ENCODE measurements at regions of chr5 and their contacts with region 1.

Region 1: GRCh38 chr5:137751869-137752491 is 2.2 kb downstream of the HNRNPA0 start:
- DNase-seq: peak in 1 of 35 experiments; percentile 56
- ATAC-seq: no peak
- H3K4me3 ChIP-seq: peak overlapping the region; percentile 44 to 97
- H3K4me3 Mint-ChIP-seq: peak overlapping the region; percentile 88 to 97 (median 95)
- H3K27ac ChIP-seq: peak overlapping the region; percentile 100
- H3K27ac Mint-ChIP-seq: peak overlapping the region; percentile 100
- H3K4me1 ChIP-seq: peaks cover 17 to 26% of the 10 kb centered on the region in 2 experiments
- H3K4me1 Mint-ChIP-seq: peaks cover 24 to 40% (median 36%) of the 10 kb centered on the region in 3 donors
- H3K27me3 ChIP-seq: no peaks in the 10 kb centered on the region
- H3K27me3 Mint-ChIP-seq: no peaks in the 10 kb centered on the region

Region 2: DNA sequence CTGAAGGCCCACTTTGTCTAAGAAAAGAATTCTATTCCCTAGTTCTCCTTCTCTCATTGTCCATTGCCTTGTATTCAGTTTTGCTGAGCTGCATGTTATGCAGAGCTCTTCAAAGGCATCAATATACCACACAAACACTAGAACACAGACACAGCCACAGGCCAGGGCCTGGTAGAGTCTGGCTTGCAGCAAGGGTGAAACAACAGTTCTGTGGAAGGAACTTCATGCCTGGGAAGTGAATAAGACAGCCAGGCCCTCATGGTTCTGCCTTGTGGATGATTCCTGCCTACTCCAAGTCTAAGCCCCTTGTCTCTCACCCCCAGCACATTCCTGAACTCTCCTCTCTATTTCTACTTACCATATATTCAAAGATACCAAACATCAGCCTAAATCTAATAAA is 46.9 kb before region 1 on chr5:
- CTCF ChIA-PET with region 1: no interaction called
- POLR2A ChIA-PET with region 1: no interaction called
- DNase-seq: no peak
- ATAC-seq: no peak
- H3K4me3 ChIP-seq: no peak overlapping the region
- H3K4me3 Mint-ChIP-seq: no peak overlapping the region
- H3K27ac ChIP-seq: no peak overlapping the region
- H3K27ac Mint-ChIP-seq: no peak overlapping the region
- H3K4me1 ChIP-seq: peaks cover 0 to 2% of the 10 kb centered on the region in 2 experiments
- H3K4me1 Mint-ChIP-seq: peaks cover 0 to 7% (median under 1%) of the 10 kb centered on the region in 3 donors
- H3K27me3 ChIP-seq: no peaks in the 10 kb centered on the region
- H3K27me3 Mint-ChIP-seq: no peaks in the 10 kb centered on the region

Region 3: DNA sequence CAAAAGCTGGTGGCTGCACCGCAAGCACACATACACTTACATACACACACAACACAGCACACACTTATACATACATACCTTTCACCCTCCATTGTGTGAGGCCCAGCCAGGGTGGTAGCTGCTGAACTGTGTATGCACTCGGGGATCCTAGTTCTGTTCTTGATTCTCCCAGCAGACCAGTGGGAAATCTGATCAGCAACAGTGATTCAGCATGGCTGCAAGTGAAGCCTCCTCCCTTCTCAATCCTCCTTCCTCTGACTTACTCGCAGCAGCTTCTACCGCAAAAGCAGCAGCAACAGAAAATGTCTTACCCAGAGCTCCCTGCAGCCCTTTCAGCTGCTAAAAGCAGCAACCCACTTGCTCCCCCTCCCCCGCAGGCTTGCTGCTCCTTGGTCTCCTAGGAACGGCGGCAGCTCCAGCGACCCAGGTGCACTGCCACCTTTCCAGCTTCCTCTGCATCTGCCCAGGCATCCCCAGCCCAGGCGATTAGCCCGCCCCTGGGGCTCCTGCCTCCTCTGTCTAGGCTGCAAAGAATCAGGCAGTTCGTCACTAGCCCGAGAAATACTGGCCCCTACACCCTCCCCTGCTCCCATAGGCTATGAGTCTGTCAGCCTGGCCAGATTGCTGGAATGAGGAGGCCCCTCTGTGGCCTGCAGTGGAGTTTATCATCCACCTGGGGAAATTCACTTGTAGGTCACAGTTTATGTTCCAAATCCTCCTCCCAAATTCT is 16.3 kb before region 1 on chr5 and contains the start of gene KLHL3:
- CTCF ChIA-PET with region 1: interaction called, 3 to 11 read pairs
- POLR2A ChIA-PET with region 1: interaction called, 5 to 6 read pairs
- DNase-seq: peak in 23 of 35 experiments; percentile 9 to 54 (median 28)
- ATAC-seq: peak; percentile 45 to 67 (median 62)
- H3K4me3 ChIP-seq: peak within 1 kb of the TSS; percentile 61 to 77
- H3K4me3 Mint-ChIP-seq: no peak within 1 kb of the TSS
- H3K27ac ChIP-seq: peak within 1 kb of the TSS; percentile 27
- H3K27ac Mint-ChIP-seq: no peak within 1 kb of the TSS
- H3K4me1 ChIP-seq: peaks cover 37 to 42% of the 10 kb centered on the region in 2 experiments
- H3K4me1 Mint-ChIP-seq: peaks cover under 1 to 13% (median 13%) of the 10 kb centered on the region in 3 donors
- H3K27me3 ChIP-seq: no peaks in the 10 kb centered on the region
- H3K27me3 Mint-ChIP-seq: no peaks in the 10 kb centered on the region
- total RNA-seq, gene KLHL3: 15.1 to 28.0 (median 26.5) TPM

Region 4: GRCh38 chr5:138035605-138036537 is 283.9 kb after region 1 on chr5:
- CTCF ChIA-PET with region 1: interaction called in 1 of 2 experiments, 10 read pairs
- POLR2A ChIA-PET with region 1: interaction called in 1 of 2 experiments, 3 read pairs
- DNase-seq: peak; percentile 15 to 87 (median 56)
- ATAC-seq: peak; percentile 39 to 53 (median 48)
- H3K4me3 ChIP-seq: no peak overlapping the region
- H3K4me3 Mint-ChIP-seq: peak overlapping the region in 1 of 3 donors; percentile 39
- H3K27ac ChIP-seq: no peak overlapping the region
- H3K27ac Mint-ChIP-seq: peak overlapping the region in 1 of 2 donors; percentile 7
- H3K4me1 ChIP-seq: peaks cover 8 to 18% of the 10 kb centered on the region in 2 experiments
- H3K4me1 Mint-ChIP-seq: peaks cover 24 to 31% (median 30%) of the 10 kb centered on the region in 3 donors
- H3K27me3 ChIP-seq: no peaks in the 10 kb centered on the region
- H3K27me3 Mint-ChIP-seq: no peaks in the 10 kb centered on the region